ENCODE measurements at regions of chr10 and their contacts with region 1.

Region 1: DNA sequence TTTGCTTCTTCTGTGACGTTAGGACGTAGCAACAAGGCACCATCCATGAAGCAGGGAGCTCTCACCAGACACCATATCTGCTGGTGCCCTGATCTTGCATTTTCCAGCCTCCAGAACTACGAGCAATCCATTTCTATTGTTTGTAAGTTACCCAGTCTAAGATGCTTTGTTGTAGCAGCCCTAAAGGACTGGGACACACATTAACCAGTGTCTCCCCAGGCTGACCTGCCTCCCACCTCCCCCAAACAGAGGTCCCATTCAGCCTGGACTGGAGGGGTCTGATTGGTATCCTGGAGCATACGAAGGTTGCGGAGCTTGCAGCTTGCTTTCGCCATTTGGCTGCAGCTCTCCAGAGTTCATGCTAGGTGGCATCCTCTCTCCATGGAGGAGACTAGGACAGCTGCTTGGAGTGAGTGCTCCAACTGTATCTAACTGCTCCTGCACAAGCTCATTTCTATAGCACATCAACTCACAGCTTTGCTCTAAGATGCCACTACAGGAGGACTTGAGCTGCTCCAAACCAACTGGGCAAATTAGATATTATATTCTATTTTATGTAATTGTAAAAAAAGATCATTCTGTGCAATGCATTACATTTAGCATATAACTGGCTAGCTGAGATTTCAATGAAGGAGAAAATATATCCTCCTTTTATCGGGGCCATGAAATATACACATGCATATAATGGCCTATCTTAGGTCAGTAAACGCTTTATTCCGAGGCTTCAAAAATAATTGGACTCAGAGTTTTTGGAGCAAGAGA is 8.0 kb upstream of the GRK5 start:
- DNase-seq: peak; percentile 71
- H3K4me3 Mint-ChIP-seq: no peak overlapping the region
- H3K27ac Mint-ChIP-seq: no peak overlapping the region
- H3K4me1 Mint-ChIP-seq: peaks cover 15% of the 10 kb centered on the region
- H3K27me3 Mint-ChIP-seq: no peaks in the 10 kb centered on the region

Region 2: GRCh38 chr10:118966076-118966849 is 233.1 kb before region 1 on chr10:
- CTCF ChIA-PET with region 1: no interaction called
- intact Hi-C with region 1: no loop called
- DNase-seq: no peak
- H3K4me3 Mint-ChIP-seq: no peak overlapping the region
- H3K27ac Mint-ChIP-seq: no peak overlapping the region
- H3K4me1 Mint-ChIP-seq: no peaks in the 10 kb centered on the region
- H3K27me3 Mint-ChIP-seq: peaks cover 7% of the 10 kb centered on the region

Region 3: DNA sequence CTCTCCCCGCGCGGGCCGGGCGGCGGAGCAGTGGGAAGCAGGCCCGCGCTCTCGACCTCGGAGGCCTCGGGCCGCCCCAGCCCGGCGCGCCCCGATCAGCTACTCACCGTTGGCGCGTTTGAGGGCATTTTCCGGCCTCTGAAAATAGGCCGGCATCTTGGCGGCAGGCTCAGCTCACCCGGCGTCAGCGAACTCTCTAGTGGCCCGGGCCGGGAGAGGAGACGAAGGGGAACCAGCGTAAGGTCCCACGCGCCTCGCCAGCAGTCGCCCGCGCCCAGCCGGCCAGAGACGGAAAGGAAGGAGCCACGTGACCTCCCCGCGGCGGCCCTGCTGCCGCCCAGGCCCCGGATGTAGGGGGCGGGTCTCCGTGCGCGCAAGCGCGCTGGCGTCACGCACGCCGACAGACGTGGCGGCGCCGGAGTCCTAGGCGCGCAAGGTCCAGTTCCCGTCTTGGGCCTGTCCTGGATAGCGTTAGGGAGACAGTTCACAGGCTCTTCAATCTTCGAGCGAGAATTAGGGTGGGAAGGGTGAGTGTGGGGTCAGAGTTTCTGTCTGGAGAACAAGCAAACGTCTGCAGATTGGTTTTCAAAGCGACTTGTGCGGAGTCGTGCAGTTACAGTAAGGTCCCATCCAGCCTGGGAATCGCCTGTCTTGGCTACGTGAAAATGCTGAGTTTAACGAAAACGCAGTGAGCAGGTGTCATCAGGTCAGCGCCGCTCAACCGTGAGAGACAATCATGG is 118.7 kb before region 1 on chr10 and contains the start of gene EIF3A:
- CTCF ChIA-PET with region 1: no interaction called
- intact Hi-C with region 1: loop called (anchors 1 kb)
- DNase-seq: peak; percentile 90
- H3K4me3 Mint-ChIP-seq: peak within 1 kb of the TSS; percentile 95
- H3K27ac Mint-ChIP-seq: peak within 1 kb of the TSS; percentile 98
- H3K4me1 Mint-ChIP-seq: peaks cover 33% of the 10 kb centered on the region
- H3K27me3 Mint-ChIP-seq: no peaks in the 10 kb centered on the region
- total RNA-seq, gene EIF3A: 113 to 120 TPM

Region 4: GRCh38 chr10:119183664-119184412 is 15.6 kb before region 1 on chr10:
- CTCF ChIA-PET with region 1: interaction called, 27 read pairs
- intact Hi-C with region 1: loop called (anchors 1 kb)
- DNase-seq: peak; percentile 50
- H3K4me3 Mint-ChIP-seq: no peak overlapping the region
- H3K27ac Mint-ChIP-seq: peak overlapping the region; percentile 74
- H3K4me1 Mint-ChIP-seq: peaks cover 22% of the 10 kb centered on the region
- H3K27me3 Mint-ChIP-seq: no peaks in the 10 kb centered on the region

Region 5: GRCh38 chr10:119416855-119417254 is 217.4 kb after region 1 on chr10:
- CTCF ChIA-PET with region 1: interaction called, 44 read pairs
- intact Hi-C with region 1: loop called (anchors 1 kb)
- DNase-seq: peak; percentile 85
- H3K4me3 Mint-ChIP-seq: no peak overlapping the region
- H3K27ac Mint-ChIP-seq: no peak overlapping the region
- H3K4me1 Mint-ChIP-seq: peaks cover 1% of the 10 kb centered on the region
- H3K27me3 Mint-ChIP-seq: no peaks in the 10 kb centered on the region

Region 6: GRCh38 chr10:119445311-119445934 is 246.0 kb after region 1 on chr10:
- CTCF ChIA-PET with region 1: interaction called, 67 read pairs
- intact Hi-C with region 1: loop called (anchors 1 kb)
- DNase-seq: peak; percentile 92
- H3K4me3 Mint-ChIP-seq: no peak overlapping the region
- H3K27ac Mint-ChIP-seq: no peak overlapping the region
- H3K4me1 Mint-ChIP-seq: peaks cover 9% of the 10 kb centered on the region
- H3K27me3 Mint-ChIP-seq: no peaks in the 10 kb centered on the region

Region 7: GRCh38 chr10:119542988-119543813 is 343.8 kb after region 1 on chr10:
- CTCF ChIA-PET with region 1: interaction called, 19 read pairs
- intact Hi-C with region 1: loop called (anchors 1 kb)
- DNase-seq: peak; percentile 83
- H3K4me3 Mint-ChIP-seq: peak overlapping the region; percentile 84
- H3K27ac Mint-ChIP-seq: peak overlapping the region; percentile 88
- H3K4me1 Mint-ChIP-seq: peaks cover 25% of the 10 kb centered on the region
- H3K27me3 Mint-ChIP-seq: no peaks in the 10 kb centered on the region

Region 8: GRCh38 chr10:119859420-119860258 is 660.2 kb after region 1 on chr10:
- CTCF ChIA-PET with region 1: no interaction called
- intact Hi-C with region 1: loop called (anchors 10 kb)
- DNase-seq: no peak
- H3K4me3 Mint-ChIP-seq: no peak overlapping the region
- H3K27ac Mint-ChIP-seq: no peak overlapping the region
- H3K4me1 Mint-ChIP-seq: peaks cover 43% of the 10 kb centered on the region
- H3K27me3 Mint-ChIP-seq: no peaks in the 10 kb centered on the region

Measured in activated naive CD4-positive, alpha-beta T cell treated with anti-CD3 and anti-CD28 coated beads for 36 hours (primary cell).